ENCODE measurements at regions of chr3 and their contacts with region 1.

Region 1: GRCh38 chr3:21672303-21672702 is 78.7 kb downstream of the ZNF385D start:
- DNase-seq: peak in 1 of 2 donors; percentile 71
- H3K4me3 ChIP-seq: no peak overlapping the region
- H3K27ac ChIP-seq: peak overlapping the region; percentile 72 to 80
- H3K4me1 ChIP-seq: peaks cover 6 to 43% of the 10 kb centered on the region in 2 donors
- H3K27me3 ChIP-seq: no peaks in the 10 kb centered on the region
- CTCF ChIP-seq: no peak

Region 2: DNA sequence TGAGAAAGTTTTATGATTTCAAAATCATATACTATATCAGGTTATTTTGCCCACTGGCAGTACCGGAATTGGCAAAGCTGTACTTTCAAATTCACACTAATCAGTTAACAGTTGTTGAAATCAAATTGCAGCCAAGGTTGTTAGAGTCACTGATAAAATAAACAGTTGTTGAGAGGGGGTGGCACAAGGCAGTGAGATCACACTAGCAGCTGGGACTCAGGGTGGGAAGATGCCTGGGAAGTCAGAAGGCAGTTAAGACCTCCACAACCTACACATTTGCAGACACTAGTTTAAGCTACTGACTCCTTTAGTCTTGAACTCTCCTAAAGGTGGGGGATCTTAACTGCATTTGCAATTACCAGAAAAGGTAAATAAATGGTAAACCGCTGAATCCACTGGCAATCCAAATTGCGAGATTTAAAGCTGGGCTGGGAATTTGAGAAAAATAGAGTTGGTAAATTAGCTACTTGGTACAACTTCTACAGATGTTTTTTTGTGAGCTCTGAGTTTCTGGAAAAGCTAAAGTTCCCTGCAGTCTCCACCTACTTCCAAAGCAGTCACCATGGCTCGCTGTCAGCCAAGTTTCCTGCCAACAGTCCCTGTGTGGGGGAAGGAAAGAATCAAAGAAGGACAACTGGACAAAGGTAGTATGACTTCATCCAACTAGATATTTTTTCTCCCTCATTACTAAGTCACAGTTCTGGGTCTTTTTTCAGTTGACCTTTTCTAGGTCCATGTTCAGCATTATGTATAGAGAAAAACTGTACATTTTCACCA is 27.0 kb before region 1 on chr3:
- intact Hi-C with region 1: loop called (anchors 2 kb)
- DNase-seq: peak; percentile 31 to 86
- H3K4me3 ChIP-seq: peak overlapping the region in 1 of 2 donors; percentile 43
- H3K27ac ChIP-seq: peak overlapping the region; percentile 80 to 85
- H3K4me1 ChIP-seq: peaks cover 2 to 17% of the 10 kb centered on the region in 2 donors
- H3K27me3 ChIP-seq: no peaks in the 10 kb centered on the region
- CTCF ChIP-seq: no peak

Region 3: GRCh38 chr3:21705769-21706168 is 33.5 kb after region 1 on chr3:
- intact Hi-C with region 1: loop called (anchors 1 kb)
- DNase-seq: peak; percentile 69 to 91
- H3K4me3 ChIP-seq: no peak overlapping the region
- H3K27ac ChIP-seq: peak overlapping the region; percentile 69 to 70
- H3K4me1 ChIP-seq: peaks cover 6 to 19% of the 10 kb centered on the region in 2 donors
- H3K27me3 ChIP-seq: no peaks in the 10 kb centered on the region
- CTCF ChIP-seq: no peak

Region 4: GRCh38 chr3:21718161-21718765 is 46.0 kb after region 1 on chr3:
- intact Hi-C with region 1: loop called (anchors 2 kb)
- DNase-seq: peak in 1 of 2 donors; percentile 83
- H3K4me3 ChIP-seq: no peak overlapping the region
- H3K27ac ChIP-seq: peak overlapping the region; percentile 80 to 85
- H3K4me1 ChIP-seq: peaks cover 8 to 35% of the 10 kb centered on the region in 2 donors
- H3K27me3 ChIP-seq: no peaks in the 10 kb centered on the region
- CTCF ChIP-seq: no peak

Region 5: GRCh38 chr3:21920421-21920861 is 248.1 kb after region 1 on chr3:
- intact Hi-C with region 1: no loop called
- DNase-seq: no peak
- H3K4me3 ChIP-seq: no peak overlapping the region
- H3K27ac ChIP-seq: no peak overlapping the region
- H3K4me1 ChIP-seq: no peaks in the 10 kb centered on the region
- H3K27me3 ChIP-seq: no peaks in the 10 kb centered on the region
- CTCF ChIP-seq: no peak

Measured in ascending aorta (tissue), 2 donors.